Breast epithelium (tissue), 4 donors: ENCODE measurements at regions of chr11 and their contacts with region 1.

Region 1: GRCh38 chr11:10211470-10211869 is 82.5 kb downstream of the SBF2 start:
- DNase-seq: no peak
- H3K4me3 ChIP-seq: no peak overlapping the region
- H3K27ac ChIP-seq: no peak overlapping the region
- H3K4me1 ChIP-seq: no peaks in the 10 kb centered on the region
- H3K27me3 ChIP-seq: no peaks in the 10 kb centered on the region
- CTCF ChIP-seq: no peak
- POLR2A ChIP-seq: no peak

Region 2: GRCh38 chr11:10727146-10727851 is 515.8 kb after region 1 on chr11:
- intact Hi-C with region 1: loop called (anchors 5 kb)
- DNase-seq: no peak
- H3K4me3 ChIP-seq: no peak overlapping the region
- H3K27ac ChIP-seq: no peak overlapping the region
- H3K4me1 ChIP-seq: no peaks in the 10 kb centered on the region
- H3K27me3 ChIP-seq: no peaks in the 10 kb centered on the region
- CTCF ChIP-seq: no peak
- POLR2A ChIP-seq: no peak

Region 3: DNA sequence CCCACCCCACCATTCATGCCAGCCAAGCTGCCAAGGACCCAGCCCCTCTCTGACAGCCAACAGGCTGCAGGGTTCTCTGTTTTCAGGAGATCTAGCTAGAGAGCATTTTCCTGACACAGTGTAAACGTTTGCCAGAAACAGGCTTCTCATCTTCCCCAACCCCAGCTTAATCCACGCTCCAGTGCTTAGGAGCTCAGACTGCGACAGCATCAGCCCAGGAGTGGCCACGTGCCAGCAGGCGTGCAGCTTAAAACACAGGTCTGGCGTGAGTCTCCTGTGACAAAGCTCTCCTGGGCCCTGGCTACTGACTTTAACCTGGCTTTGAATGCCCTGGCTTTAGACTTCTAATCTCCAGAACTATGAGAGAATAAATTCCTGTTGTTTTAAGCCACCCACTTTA is 1343.7 kb after region 1 on chr11:
- intact Hi-C with region 1: loop called (anchors 10 kb)
- DNase-seq: no peak
- H3K4me3 ChIP-seq: no peak overlapping the region
- H3K27ac ChIP-seq: no peak overlapping the region
- H3K4me1 ChIP-seq: no peaks in the 10 kb centered on the region
- H3K27me3 ChIP-seq: no peaks in the 10 kb centered on the region
- CTCF ChIP-seq: no peak
- POLR2A ChIP-seq: no peak